GM13976 (cell line): ENCODE measurements at regions of chr4 and their contacts with region 1.

Region 1: GRCh38 chr4:86493460-86493859 is 100.7 kb upstream of the PTPN13 start:
- DNase-seq: no peak
- CTCF ChIP-seq: no peak

Region 2: GRCh38 chr4:85448869-85449626 is 1044.4 kb before region 1 on chr4:
- in situ Hi-C with region 1: no loop called
- DNase-seq: peak; percentile 10
- CTCF ChIP-seq: no peak

Region 3: DNA sequence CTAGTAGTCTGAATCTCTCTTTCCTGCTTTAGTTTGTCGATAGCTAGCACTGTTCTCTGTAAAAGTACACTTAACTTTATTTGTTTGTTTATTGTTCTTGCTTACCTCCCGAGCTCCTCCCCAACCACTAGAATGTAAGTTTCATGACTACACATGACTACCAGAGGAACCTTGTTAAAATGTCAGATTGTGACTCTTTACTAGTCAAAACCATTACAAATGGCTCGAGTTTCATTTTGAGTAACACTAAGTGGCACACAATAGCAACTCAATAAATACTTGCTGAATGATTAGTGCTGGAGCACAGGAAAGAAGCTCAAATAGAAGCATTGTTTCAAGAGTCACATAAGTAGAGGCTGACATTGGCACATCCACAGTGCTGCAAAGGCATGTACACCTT is 249.7 kb before region 1 on chr4:
- in situ Hi-C with region 1: no loop called
- DNase-seq: no peak
- CTCF ChIP-seq: no peak

Region 4: DNA sequence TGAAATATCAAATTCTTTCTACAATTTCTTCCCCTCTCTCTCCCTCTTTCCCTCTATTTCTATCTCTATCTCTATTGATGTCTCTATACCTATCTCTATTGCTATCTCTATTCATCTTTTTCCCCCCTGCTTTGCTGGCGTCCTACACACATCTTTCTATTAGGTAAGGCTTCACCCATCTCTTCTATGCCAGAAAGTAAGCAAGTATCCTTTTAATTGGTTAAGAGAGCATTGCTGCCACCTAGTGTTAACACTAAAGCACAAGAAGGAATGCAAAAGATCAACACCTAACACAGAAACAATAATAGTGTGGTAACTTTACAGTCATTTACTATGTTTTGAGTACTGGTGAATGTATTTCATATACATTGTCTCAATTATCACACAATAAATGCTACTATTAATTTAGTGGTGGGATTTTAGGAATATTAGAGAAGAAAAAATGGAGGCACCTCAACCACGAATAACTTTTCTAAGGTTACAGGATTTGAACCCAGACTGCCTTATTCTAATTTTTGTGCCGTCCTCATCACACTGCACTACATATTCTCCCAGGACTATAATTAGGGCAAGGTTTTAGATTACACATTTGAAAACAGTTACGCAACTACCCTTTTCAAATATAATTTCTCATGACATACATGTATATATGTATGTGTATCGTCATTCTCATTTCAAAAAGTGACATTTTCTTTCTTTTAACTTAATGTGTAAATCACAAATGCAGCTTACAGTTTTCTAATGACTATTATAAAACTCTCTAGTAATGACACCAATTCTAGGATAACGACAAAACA is 402.4 kb after region 1 on chr4:
- in situ Hi-C with region 1: loop called (anchors 5 kb)
- DNase-seq: peak; percentile 69
- CTCF ChIP-seq: peak; percentile 65